ENCODE measurements at regions of chr16 and their contacts with region 1.

Region 1: GRCh38 chr16:69381231-69381630 is 4.6 kb downstream of the TERF2 start:
- DNase-seq: no peak
- ATAC-seq: no peak

Region 2: DNA sequence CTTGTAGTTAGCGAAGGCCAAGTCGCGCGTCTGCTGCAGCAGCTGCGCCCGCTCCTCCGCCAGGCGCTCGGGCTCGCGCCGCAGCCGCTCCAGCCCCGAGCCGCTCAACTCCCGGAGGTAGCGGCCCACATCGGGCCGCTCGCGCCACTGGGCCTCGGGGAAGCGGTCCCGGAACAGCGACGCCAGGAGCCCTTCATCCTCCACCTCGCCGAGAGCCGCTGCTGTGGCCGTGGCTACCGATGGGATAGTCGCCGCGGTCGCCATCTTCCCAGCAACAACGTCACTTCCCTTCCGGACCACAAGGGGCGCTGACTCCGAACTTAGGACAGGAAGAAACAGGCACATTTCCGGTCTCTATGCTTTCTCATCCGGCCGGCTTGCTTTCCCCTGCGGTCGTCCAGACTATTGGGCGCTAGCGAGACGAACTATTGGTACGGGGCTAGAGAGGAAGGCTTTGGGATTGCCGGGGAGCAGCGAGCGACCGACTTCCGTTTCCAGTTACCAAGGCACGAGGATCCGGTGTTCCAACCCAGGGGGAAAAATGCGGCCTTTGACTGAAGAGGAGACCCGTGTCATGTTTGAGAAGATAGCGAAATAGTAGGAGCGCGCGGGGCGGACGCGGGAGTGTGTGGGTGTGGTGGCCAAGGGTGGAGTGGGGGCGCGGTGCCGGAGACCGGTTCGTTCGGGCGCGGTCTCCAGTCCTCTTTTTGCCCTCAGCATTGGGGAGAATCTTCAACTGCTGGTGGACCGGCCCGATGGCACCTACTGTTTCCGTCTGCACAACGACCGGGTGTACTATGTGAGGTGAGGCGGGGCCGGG is 41.7 kb before region 1 on chr16 and contains the starts of genes COG8 and NIP7:
- intact Hi-C with region 1: loop called (anchors 5 kb)
- DNase-seq: peak; percentile 97
- ATAC-seq: peak; percentile 99
- total RNA-seq, gene COG8: 19.6 TPM
- total RNA-seq, gene NIP7: 9.6 TPM

Region 3: GRCh38 chr16:69767459-69768229 is 386.4 kb after region 1 on chr16:
- intact Hi-C with region 1: no loop called
- DNase-seq: no peak
- ATAC-seq: no peak

Measured in Right ventricle myocardium inferior (tissue), 1 donor.